ENCODE measurements at regions of chr20 and their contacts with region 1.

Region 1: DNA sequence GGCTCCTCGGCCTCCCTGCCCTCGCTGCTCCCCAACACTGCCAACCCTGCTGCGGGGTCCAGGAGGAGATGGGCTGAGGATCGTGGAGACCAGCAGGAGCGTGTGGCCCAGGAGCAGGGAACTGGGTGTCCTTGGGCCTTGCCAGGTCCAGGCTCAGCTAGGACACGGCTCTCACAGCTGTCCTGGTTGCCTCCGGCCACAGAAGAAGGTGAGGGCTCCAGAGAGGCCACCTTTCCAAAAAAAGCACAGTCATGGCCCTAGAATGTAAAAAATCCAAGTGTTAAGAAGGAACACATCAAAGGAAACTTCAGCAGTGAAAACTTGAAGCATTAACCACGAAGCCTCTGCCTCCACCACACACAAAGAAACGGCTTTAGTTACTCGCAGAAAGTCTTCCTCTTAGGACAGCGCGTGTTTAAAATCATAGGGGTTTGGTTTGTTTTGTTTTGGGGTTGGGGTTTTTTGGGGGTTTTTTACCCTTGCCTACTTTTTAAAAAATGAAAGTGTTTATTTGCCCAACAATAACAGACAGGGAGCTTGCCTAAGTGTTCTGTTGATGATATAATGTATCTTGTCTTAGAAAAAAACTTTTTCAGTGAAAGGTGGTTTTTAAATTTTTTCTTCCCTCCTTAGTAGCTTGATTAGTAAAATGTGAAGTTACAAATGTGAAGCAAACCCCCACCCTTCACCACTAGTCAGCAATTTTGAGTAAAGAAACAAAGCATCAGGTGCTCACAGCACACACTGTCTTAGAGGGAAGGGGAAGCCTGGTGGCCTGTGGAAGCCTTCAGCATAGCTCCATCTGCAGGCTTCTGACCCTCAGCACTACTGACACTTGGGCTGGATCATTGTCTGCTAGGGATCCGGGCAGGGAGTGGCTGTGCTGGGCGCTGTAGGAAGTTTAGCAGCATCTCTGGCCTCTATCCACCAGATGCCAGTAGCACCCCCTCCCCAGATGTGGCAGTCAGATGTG is 60.0 kb downstream of the PTPN1 start:
- DNase-seq: peak in 3 of 7 donors; percentile 41 to 60 (median 58)
- H3K4me3 ChIP-seq: no peak overlapping the region
- H3K27ac ChIP-seq: peak overlapping the region in 3 of 5 donors; percentile 37 to 54 (median 45)
- H3K4me1 ChIP-seq: peaks cover 25 to 33% of the 10 kb centered on the region in 2 donors
- H3K27me3 ChIP-seq: no peaks in the 10 kb centered on the region
- CTCF ChIP-seq: peak in 5 of 6 experiments; percentile 14 to 24 (median 22)
- POLR2A ChIP-seq: no peak

Region 2: DNA sequence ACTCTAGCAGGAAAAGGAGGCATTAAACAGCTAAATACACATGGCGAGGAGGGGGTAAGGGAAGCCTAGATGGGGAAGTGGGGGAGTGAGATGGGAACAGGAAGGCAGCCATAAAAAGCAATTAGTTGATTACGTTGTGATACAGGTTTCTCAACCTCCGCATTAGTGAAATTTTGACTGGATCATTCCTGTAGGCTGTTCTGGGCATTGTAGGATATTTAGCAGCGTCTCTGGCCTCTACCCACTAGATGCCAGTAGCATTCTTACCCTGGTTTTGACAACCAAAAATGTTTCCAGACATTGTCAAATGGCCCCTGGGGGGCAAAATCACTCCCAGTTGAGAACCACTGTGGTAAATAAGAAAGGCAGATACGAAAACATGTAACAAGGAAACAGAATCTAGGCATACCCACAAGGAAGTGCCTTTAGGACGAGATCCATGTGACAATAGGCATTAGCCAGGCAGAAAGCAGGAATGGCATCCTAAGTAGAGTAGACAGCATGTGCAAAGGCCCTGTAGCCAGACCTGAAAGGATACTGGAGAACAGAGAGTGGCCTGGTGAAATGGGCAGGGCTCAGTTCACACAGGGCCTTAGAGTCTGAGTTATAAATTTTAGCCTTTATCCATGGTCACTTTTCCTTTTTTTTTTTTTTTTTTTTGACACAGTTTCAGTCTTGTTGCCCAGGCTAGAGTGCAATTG is 85.7 kb before region 1 on chr20:
- intact Hi-C with region 1: loop called in 1 of 2 experiments (anchors 5 kb)
- DNase-seq: no peak
- H3K4me3 ChIP-seq: no peak overlapping the region
- H3K27ac ChIP-seq: peak overlapping the region in 3 of 5 donors; percentile 65 to 86 (median 80)
- H3K4me1 ChIP-seq: peaks cover 0 to 5% of the 10 kb centered on the region in 2 donors
- H3K27me3 ChIP-seq: no peaks in the 10 kb centered on the region
- CTCF ChIP-seq: no peak
- POLR2A ChIP-seq: no peak

Region 3: GRCh38 chr20:50516180-50516934 is 53.8 kb before region 1 on chr20:
- intact Hi-C with region 1: loop called in 1 of 2 experiments (anchors 5 kb)
- DNase-seq: no peak
- H3K4me3 ChIP-seq: no peak overlapping the region
- H3K27ac ChIP-seq: peak overlapping the region in 2 of 5 donors; percentile 3 to 40
- H3K4me1 ChIP-seq: peaks cover 55 to 97% of the 10 kb centered on the region in 2 donors
- H3K27me3 ChIP-seq: no peaks in the 10 kb centered on the region
- CTCF ChIP-seq: no peak
- POLR2A ChIP-seq: no peak

Region 4: GRCh38 chr20:51184289-51184688 is 614.1 kb after region 1 on chr20:
- intact Hi-C with region 1: no loop called
- DNase-seq: no peak
- H3K4me3 ChIP-seq: no peak overlapping the region
- H3K27ac ChIP-seq: no peak overlapping the region
- H3K4me1 ChIP-seq: no peaks in the 10 kb centered on the region
- H3K27me3 ChIP-seq: peaks cover 8% of the 10 kb centered on the region
- CTCF ChIP-seq: no peak
- POLR2A ChIP-seq: no peak

Measured in adrenal gland (tissue), 19 donors.